ENCODE measurements at regions of chr6 and their contacts with region 1.

Region 1: GRCh38 chr6:38493931-38494547 is 145.7 kb downstream of the BTBD9 start:
- DNase-seq: peak; percentile 51 to 84 (median 75)
- ATAC-seq: peak; percentile 58
- H3K4me3 ChIP-seq: no peak overlapping the region
- H3K4me3 Mint-ChIP-seq: no peak overlapping the region
- H3K27ac ChIP-seq: no peak overlapping the region
- H3K27ac Mint-ChIP-seq: no peak overlapping the region
- H3K4me1 ChIP-seq: no peaks in the 10 kb centered on the region
- H3K4me1 Mint-ChIP-seq: peaks cover 6% of the 10 kb centered on the region
- H3K27me3 ChIP-seq: no peaks in the 10 kb centered on the region
- H3K27me3 Mint-ChIP-seq: no peaks in the 10 kb centered on the region
- CTCF ChIP-seq: peak; percentile 96

Region 2: DNA sequence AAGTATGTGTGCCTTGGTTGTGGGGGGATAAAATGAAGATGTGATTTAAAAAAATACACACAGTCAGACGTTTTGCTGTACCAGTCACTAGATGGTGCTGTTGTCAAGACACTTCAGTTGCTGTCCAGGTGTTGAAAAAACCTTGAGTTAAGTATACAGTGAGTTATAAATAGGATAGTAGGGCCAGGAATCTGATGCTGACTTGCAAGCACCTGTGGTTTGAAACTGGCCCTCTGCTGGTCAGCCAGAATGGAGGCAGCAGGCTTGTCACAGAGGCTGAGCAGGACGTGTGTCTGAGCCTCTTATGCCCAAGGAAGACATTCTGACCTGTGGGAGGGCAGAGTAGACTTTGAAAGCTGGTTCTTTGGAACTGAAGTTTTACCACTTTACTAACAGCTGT is 1112.5 kb before region 1 on chr6:
- CTCF ChIA-PET with region 1: no interaction called
- POLR2A ChIA-PET with region 1: no interaction called
- intact Hi-C with region 1: loop called (anchors 5 kb)
- DNase-seq: peak in 7 of 14 experiments; percentile 1 to 74 (median 24)
- ATAC-seq: peak; percentile 41
- H3K4me3 ChIP-seq: no peak overlapping the region
- H3K4me3 Mint-ChIP-seq: no peak overlapping the region
- H3K27ac ChIP-seq: no peak overlapping the region
- H3K27ac Mint-ChIP-seq: no peak overlapping the region
- H3K4me1 ChIP-seq: no peaks in the 10 kb centered on the region
- H3K4me1 Mint-ChIP-seq: no peaks in the 10 kb centered on the region
- H3K27me3 ChIP-seq: no peaks in the 10 kb centered on the region
- H3K27me3 Mint-ChIP-seq: no peaks in the 10 kb centered on the region
- CTCF ChIP-seq: peak; percentile 57

Region 3: DNA sequence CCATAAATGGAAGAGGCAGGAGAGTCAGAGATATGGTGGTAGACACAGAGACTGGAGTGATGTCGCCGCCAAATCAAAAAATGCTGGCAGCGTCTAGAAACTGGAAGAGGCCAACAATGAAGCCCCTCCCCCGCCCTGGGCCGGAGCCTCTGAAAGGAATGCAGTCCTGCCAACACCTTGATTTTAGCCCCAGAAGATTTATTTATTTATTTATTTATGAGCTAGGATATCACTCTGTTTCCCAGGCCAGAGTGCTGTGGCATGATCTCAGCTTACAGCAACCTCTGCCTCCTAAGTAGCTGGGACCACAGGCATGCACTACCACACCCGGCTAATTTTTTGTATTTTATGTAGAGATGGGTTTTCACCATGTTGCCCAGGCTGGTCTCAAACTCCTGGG is 911.7 kb before region 1 on chr6:
- CTCF ChIA-PET with region 1: no interaction called
- POLR2A ChIA-PET with region 1: no interaction called
- intact Hi-C with region 1: loop called in 1 of 2 experiments (anchors 10 kb)
- DNase-seq: no peak
- ATAC-seq: no peak
- H3K4me3 ChIP-seq: no peak overlapping the region
- H3K4me3 Mint-ChIP-seq: no peak overlapping the region
- H3K27ac ChIP-seq: no peak overlapping the region
- H3K27ac Mint-ChIP-seq: no peak overlapping the region
- H3K4me1 ChIP-seq: no peaks in the 10 kb centered on the region
- H3K4me1 Mint-ChIP-seq: no peaks in the 10 kb centered on the region
- H3K27me3 ChIP-seq: no peaks in the 10 kb centered on the region
- H3K27me3 Mint-ChIP-seq: no peaks in the 10 kb centered on the region
- CTCF ChIP-seq: no peak

Region 4: GRCh38 chr6:37705239-37706051 is 788.6 kb before region 1 on chr6:
- CTCF ChIA-PET with region 1: no interaction called
- POLR2A ChIA-PET with region 1: no interaction called
- intact Hi-C with region 1: loop called in 1 of 2 experiments (anchors 2 kb)
- DNase-seq: peak; percentile 54 to 90 (median 70)
- ATAC-seq: peak; percentile 92
- H3K4me3 ChIP-seq: peak overlapping the region; percentile 64
- H3K4me3 Mint-ChIP-seq: peak overlapping the region; percentile 86
- H3K27ac ChIP-seq: no peak overlapping the region
- H3K27ac Mint-ChIP-seq: peak overlapping the region; percentile 55
- H3K4me1 ChIP-seq: peaks cover 16% of the 10 kb centered on the region
- H3K4me1 Mint-ChIP-seq: peaks cover 6% of the 10 kb centered on the region
- H3K27me3 ChIP-seq: no peaks in the 10 kb centered on the region
- H3K27me3 Mint-ChIP-seq: peaks cover 17% of the 10 kb centered on the region
- CTCF ChIP-seq: no peak

Region 5: DNA sequence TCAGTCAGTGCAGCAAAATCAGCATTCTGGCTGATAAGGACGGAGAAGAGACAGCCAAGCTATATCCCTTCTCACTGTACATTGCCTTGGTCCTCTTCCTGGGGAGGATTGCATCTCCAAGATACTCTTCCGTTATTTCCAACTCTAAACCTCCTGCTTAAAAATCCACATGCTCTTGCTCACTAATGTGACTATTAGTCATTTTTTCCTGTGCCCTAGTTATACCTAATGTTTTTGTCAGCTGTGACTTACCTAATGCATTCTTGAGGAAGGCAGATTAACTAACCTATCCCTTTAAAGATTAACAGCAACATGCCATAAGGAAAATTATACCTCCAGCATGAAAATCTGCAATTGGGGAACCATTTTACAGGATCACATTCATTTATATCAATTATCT is 171.9 kb before region 1 on chr6:
- CTCF ChIA-PET with region 1: no interaction called
- POLR2A ChIA-PET with region 1: no interaction called
- intact Hi-C with region 1: no loop called
- DNase-seq: no peak
- ATAC-seq: no peak
- H3K4me3 ChIP-seq: no peak overlapping the region
- H3K4me3 Mint-ChIP-seq: no peak overlapping the region
- H3K27ac ChIP-seq: no peak overlapping the region
- H3K27ac Mint-ChIP-seq: no peak overlapping the region
- H3K4me1 ChIP-seq: no peaks in the 10 kb centered on the region
- H3K4me1 Mint-ChIP-seq: no peaks in the 10 kb centered on the region
- H3K27me3 ChIP-seq: no peaks in the 10 kb centered on the region
- H3K27me3 Mint-ChIP-seq: no peaks in the 10 kb centered on the region
- CTCF ChIP-seq: no peak

Region 6: GRCh38 chr6:38671885-38672467 is 177.9 kb after region 1 on chr6:
- CTCF ChIA-PET with region 1: interaction called, 4 read pairs
- POLR2A ChIA-PET with region 1: no interaction called
- intact Hi-C with region 1: loop called (anchors 1 to 5 kb)
- DNase-seq: peak in 5 of 14 experiments; percentile 18 to 73 (median 61)
- ATAC-seq: peak; percentile 59
- H3K4me3 ChIP-seq: no peak overlapping the region
- H3K4me3 Mint-ChIP-seq: no peak overlapping the region
- H3K27ac ChIP-seq: no peak overlapping the region
- H3K27ac Mint-ChIP-seq: no peak overlapping the region
- H3K4me1 ChIP-seq: peaks cover 7% of the 10 kb centered on the region
- H3K4me1 Mint-ChIP-seq: peaks cover 25% of the 10 kb centered on the region
- H3K27me3 ChIP-seq: no peaks in the 10 kb centered on the region
- H3K27me3 Mint-ChIP-seq: no peaks in the 10 kb centered on the region
- CTCF ChIP-seq: peak; percentile 77